Cardiac septum (tissue), 1 donor: ENCODE measurements at regions of chr17 and their contacts with region 1.

Region 1: DNA sequence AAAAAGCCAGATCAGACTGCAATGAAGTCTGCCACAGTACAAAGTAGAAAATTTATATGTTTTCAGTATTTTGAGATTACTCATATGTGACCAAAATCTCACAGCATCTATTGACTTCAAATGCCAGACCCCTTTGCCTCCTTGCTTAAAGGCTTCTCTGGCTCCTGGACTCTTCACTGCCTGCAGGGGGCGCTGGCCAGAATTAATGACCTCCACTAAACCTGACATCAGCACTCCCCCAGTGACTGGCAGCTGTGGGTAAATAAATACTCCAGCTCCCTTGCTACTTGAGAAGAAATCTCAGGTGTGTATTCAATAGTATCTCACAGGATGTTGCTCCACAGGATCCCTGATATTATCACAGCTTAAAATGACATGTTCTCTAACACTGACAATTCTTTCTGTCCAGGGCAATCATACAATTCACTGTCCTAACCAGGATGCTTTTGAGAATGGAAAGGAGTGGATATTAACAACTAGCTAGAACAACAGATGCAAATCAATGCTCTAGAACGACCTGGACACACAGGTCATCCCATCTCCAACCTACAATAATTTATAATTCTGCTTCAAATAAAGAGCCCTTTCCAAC is 4.0 kb downstream of the BECN1 start:
- DNase-seq: no peak

Region 2: DNA sequence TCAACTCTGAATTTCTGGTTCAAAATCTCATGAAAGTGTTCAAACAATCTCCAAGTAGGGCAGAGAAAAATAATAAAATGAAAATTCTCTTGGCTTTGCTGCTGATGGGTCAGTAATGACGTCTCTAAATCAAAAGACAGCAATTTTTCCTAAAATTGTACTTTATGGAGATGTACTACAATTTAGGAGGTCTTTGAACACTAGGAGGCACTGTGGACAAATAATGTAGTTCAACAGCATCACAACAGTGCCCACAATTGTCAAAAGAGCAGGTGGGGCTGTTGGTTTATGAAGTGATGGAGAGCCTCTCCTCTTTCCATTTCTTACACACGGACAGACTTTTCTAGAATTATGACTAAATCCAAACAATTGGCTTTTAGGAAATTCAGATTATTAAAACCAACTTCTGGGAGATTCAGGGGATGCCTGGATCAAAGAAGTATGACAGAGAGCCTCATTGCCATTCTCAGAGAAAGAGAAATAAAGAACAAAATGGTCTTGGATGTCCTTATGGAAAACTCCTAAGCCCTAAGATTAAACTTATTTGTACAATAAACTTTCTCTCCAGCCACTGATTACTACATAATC is 99.0 kb before region 1 on chr17:
- intact Hi-C with region 1: loop called (anchors 5 kb)
- DNase-seq: no peak

Region 3: GRCh38 chr17:42855048-42855596 is 35.1 kb after region 1 on chr17:
- intact Hi-C with region 1: no loop called
- DNase-seq: no peak